ENCODE measurements at regions of chr16 and their contacts with region 1.

Region 1: DNA sequence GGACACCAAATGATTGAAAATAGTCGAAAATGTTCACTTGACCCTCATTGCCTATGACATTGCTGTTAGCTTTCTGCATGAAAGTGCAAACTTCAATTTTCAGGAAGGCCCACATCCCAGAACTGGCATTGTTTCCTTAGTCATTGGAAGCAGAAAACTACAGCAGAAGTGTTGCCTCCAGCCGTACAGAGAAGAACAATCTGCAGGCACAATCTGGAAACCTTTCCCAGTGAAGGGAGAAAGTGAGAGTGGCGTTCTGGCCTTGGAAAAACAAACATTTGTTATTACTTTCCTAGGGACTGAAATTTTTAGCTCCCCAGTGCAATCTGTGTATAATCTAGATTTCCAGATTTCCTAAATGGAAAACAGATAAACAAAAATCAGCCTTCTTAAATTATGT is 529.5 kb upstream of the RBFOX1 start:
- DNase-seq: no peak
- H3K4me3 ChIP-seq: no peak overlapping the region
- H3K27ac ChIP-seq: no peak overlapping the region
- H3K4me1 ChIP-seq: no peaks in the 10 kb centered on the region
- H3K27me3 ChIP-seq: no peaks in the 10 kb centered on the region
- CTCF ChIP-seq: no peak
- POLR2A ChIP-seq: no peak

Region 2: GRCh38 chr16:6771956-6772355 is 31.2 kb before region 1 on chr16:
- intact Hi-C with region 1: no loop called
- DNase-seq: no peak
- H3K4me3 ChIP-seq: no peak overlapping the region
- H3K27ac ChIP-seq: no peak overlapping the region
- H3K4me1 ChIP-seq: no peaks in the 10 kb centered on the region
- H3K27me3 ChIP-seq: no peaks in the 10 kb centered on the region
- CTCF ChIP-seq: no peak
- POLR2A ChIP-seq: no peak

Region 3: GRCh38 chr16:6926762-6927161 is 123.6 kb after region 1 on chr16:
- intact Hi-C with region 1: loop called (anchors 10 kb)
- DNase-seq: no peak
- H3K4me3 ChIP-seq: no peak overlapping the region
- H3K27ac ChIP-seq: no peak overlapping the region
- H3K4me1 ChIP-seq: no peaks in the 10 kb centered on the region
- H3K27me3 ChIP-seq: no peaks in the 10 kb centered on the region
- CTCF ChIP-seq: no peak
- POLR2A ChIP-seq: no peak